Common myeloid progenitor, CD34-positive (primary cell): ENCODE measurements at regions of chr5 and their contacts with region 1.

Region 1: GRCh38 chr5:119411935-119412602 is 40.2 kb upstream of the HSD17B4 start:
- DNase-seq: peak; percentile 82 to 87 (median 84)
- H3K4me3 ChIP-seq: peak overlapping the region; percentile 35 to 96 (median 78)
- H3K27ac ChIP-seq: peak overlapping the region; percentile 9 to 75
- H3K4me1 ChIP-seq: peaks cover 0 to 15% (median 8%) of the 10 kb centered on the region in 4 experiments
- H3K27me3 ChIP-seq: no peaks in the 10 kb centered on the region

Region 2: GRCh38 chr5:119022017-119022745 is 389.9 kb before region 1 on chr5:
- CTCF ChIA-PET with region 1: interaction called, 13 read pairs
- POLR2A ChIA-PET with region 1: no interaction called
- DNase-seq: peak; percentile 52 to 66 (median 59)
- H3K4me3 ChIP-seq: no peak overlapping the region
- H3K27ac ChIP-seq: no peak overlapping the region
- H3K4me1 ChIP-seq: peaks cover 3 to 25% (median 8%) of the 10 kb centered on the region in 4 experiments
- H3K27me3 ChIP-seq: no peaks in the 10 kb centered on the region

Region 3: DNA sequence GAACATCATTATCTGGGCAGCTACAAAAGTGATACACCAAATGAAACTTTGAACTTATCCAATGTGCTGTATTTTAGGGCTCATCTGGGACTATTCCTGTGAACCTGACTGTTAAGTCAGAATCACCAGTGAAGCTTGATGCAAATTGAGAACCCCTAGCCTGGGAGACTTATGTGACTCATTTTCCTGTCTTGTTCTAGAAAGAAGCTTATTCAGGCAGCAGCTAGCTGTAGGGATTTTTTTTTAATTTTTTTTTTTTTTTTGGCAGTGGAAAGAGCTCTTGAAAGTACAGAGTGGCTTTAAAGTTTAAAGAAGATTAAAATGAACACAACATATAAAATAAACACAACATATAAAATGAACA is 137.3 kb before region 1 on chr5:
- CTCF ChIA-PET with region 1: interaction called, 23 read pairs
- POLR2A ChIA-PET with region 1: no interaction called
- DNase-seq: peak; percentile 52 to 84 (median 73)
- H3K4me3 ChIP-seq: peak overlapping the region in 1 of 7 experiments; percentile 20
- H3K27ac ChIP-seq: peak overlapping the region; percentile 30 to 70
- H3K4me1 ChIP-seq: peaks cover 61 to 80% (median 70%) of the 10 kb centered on the region in 4 experiments
- H3K27me3 ChIP-seq: no peaks in the 10 kb centered on the region

Region 4: DNA sequence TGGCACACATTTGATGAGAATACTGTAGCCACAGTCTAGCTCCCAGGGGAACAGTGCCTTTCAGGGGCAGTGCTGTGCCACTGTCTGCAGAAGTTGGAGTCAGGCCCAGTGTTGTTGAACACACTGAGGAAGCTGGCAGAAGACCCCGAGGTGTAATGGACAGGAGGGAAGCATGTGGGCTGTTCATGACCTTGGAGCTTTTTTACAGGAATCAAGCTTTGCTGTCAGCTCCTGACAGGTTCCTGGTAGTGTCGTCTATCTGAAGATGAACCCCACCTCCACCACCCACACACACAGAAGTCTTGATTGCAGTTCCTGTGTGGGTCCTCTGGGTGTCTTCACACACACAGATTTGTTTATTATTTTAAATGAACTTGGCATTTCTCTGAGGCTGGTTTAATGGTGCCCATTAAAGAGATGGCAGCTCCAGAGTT is 96.5 kb before region 1 on chr5:
- CTCF ChIA-PET with region 1: interaction called, 76 read pairs
- POLR2A ChIA-PET with region 1: interaction called, 3 read pairs
- DNase-seq: peak; percentile 59 to 76 (median 67)
- H3K4me3 ChIP-seq: no peak overlapping the region
- H3K27ac ChIP-seq: peak overlapping the region in 1 of 2 experiments; percentile 15
- H3K4me1 ChIP-seq: peaks cover 18 to 64% (median 41%) of the 10 kb centered on the region in 4 experiments
- H3K27me3 ChIP-seq: no peaks in the 10 kb centered on the region

Region 5: DNA sequence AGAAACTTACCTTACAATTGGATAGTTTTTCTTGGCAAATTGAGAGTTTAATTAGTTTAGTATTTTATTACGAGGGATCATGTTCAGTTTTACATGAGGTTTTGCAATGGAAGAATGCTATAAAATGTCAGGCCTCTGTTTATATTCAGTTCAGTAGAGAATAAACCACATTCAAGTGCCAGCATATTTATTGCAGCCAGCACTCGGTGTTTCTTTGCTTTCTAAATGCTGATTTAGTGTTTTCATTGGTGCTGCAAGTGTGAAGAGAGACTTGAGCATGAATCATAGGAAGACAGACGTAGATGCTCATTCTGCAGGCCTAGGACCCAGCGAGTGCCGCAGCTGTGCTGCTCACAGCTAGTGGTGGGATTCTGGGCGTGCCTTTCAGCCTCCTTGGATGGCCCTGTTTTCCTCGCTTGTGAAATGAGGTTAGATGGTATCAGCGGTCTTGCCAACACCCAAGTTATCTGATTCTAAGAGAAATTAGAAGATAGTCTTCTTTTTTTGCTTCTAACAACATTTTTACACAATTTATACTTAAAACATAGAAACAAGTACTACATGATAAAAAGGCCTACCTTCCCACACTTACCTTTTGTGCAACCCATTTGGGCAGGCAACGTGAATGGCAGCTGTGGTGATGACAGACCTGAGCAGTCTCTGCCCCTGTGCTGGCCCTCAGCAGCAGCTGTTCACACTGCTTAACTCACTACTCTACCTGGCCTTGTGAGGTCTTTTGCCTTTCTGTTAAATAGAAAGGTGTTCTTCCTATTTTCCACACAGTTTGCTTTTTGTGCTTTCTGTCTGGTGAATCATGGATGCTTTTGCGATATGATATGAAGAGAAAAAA is 83.1 kb before region 1 on chr5:
- CTCF ChIA-PET with region 1: interaction called, 18 read pairs
- POLR2A ChIA-PET with region 1: interaction called, 3 read pairs
- DNase-seq: peak in 1 of 3 donors; percentile 68
- H3K4me3 ChIP-seq: peak overlapping the region in 1 of 7 experiments; percentile 3
- H3K27ac ChIP-seq: peak overlapping the region; percentile 48 to 84
- H3K4me1 ChIP-seq: peaks cover 36 to 95% (median 77%) of the 10 kb centered on the region in 4 experiments
- H3K27me3 ChIP-seq: no peaks in the 10 kb centered on the region

Region 6: DNA sequence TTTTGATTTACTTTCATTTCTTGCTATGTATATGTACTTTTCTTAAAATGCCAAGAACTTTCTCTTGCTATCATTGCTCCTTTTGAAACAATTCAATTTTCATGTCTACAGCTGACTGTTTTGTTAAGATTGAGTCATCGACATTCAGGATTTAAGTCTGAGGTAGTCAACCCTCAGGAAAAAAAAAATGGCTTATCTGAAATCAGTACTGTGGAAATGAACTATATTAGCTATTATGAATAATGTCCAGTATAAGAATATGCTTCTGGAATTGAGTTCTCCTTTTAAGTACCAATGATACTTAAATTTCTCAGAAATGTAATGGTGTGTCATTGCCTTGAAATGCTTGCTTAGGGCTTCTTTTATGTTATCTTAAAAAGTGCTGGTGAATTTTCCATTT is 18.3 kb before region 1 on chr5:
- CTCF ChIA-PET with region 1: interaction called, 10 read pairs
- POLR2A ChIA-PET with region 1: no interaction called
- DNase-seq: no peak
- H3K4me3 ChIP-seq: no peak overlapping the region
- H3K27ac ChIP-seq: no peak overlapping the region
- H3K4me1 ChIP-seq: peaks cover 12 to 22% (median 14%) of the 10 kb centered on the region in 4 experiments
- H3K27me3 ChIP-seq: no peaks in the 10 kb centered on the region

Region 7: DNA sequence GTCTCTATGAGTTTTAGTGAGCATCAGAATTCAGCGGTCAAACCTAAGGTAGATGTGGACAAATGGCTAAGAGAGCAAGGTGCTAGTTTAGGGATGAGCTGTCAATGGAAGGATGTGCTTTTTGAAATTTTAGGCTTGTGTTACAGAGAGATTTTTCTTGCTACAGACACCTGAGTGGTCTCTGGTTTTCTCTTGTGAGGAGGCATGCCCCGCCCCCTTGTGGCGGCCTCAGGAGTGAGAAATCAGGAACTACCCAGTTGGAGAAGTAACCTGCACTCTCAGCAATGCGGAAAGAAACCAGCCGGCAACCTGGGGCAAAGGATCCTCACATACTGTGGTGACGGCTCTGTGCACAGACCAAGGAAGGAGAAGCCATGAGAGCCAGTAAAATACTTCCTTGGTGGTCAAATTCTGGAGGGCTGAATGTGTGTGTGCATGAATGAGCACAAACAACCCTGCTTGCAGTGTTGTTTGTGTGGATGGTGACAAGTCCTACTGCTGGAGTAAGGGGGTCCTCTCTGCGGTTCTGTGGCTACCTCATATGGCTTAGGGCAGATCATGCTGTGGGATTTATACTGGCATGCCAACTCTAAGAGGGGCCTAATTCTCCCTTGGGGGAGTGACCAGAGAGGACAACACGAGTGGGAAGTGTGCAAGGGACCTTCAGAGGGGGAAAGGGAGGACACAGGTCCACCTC is 23.5 kb after region 1 on chr5:
- CTCF ChIA-PET with region 1: interaction called, 14 read pairs
- POLR2A ChIA-PET with region 1: no interaction called
- DNase-seq: peak; percentile 85 to 96 (median 91)
- H3K4me3 ChIP-seq: peak overlapping the region in 2 of 7 experiments; percentile 36 to 50
- H3K27ac ChIP-seq: no peak overlapping the region
- H3K4me1 ChIP-seq: peaks cover 0 to 38% (median 31%) of the 10 kb centered on the region in 4 experiments
- H3K27me3 ChIP-seq: no peaks in the 10 kb centered on the region